AG04450 (cell line): ENCODE measurements at regions of chr11 and their contacts with region 1.

Region 1: DNA sequence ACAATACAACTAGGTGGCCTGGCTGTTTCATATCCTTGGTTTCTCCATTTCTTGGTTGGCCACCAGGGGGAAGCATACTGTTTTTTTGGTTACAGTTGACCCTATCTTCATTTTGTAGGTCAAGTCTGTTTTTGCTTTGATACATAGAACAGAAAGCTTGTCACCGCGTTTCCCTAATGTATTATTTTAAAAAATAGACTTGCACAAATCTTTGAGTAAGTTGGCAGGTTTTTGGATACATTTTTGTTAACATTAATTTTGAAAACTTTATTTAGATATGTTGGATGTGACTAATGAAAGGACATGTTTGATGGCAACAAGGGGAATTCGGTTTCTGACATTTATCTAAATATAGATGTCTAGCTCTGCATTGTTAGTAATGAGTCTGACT is 3.0 kb downstream of the NCR3LG1 start:
- DNase-seq: peak; percentile 26
- H3K4me3 ChIP-seq: no peak overlapping the region; the same call in 1 of the 2 replicates
- H3K27ac ChIP-seq: no peak overlapping the region
- H3K27me3 ChIP-seq: no peaks in the 10 kb centered on the region
- CTCF ChIP-seq: peak; percentile 73

Region 2: GRCh38 chr11:17129003-17129402 is 225.6 kb before region 1 on chr11:
- CTCF ChIA-PET with region 1: interaction called, 11 read pairs
- POLR2A ChIA-PET with region 1: no interaction called
- DNase-seq: no peak
- H3K4me3 ChIP-seq: no peak overlapping the region
- H3K27ac ChIP-seq: no peak overlapping the region
- H3K27me3 ChIP-seq: no peaks in the 10 kb centered on the region
- CTCF ChIP-seq: no peak

Region 3: GRCh38 chr11:17276236-17277023 is 78.2 kb before region 1 on chr11 and contains the start of gene NUCB2:
- CTCF ChIA-PET with region 1: interaction called, 15 read pairs
- POLR2A ChIA-PET with region 1: interaction called, 3 read pairs
- DNase-seq: peak; percentile 89
- H3K4me3 ChIP-seq: peak within 1 kb of the TSS; percentile 90
- H3K27ac ChIP-seq: peak within 1 kb of the TSS; percentile 92
- H3K27me3 ChIP-seq: no peaks in the 10 kb centered on the region
- CTCF ChIP-seq: no peak
- polyA plus RNA-seq, gene NUCB2: 183 and 275 TPM in 2 replicates

Region 4: GRCh38 chr11:17343907-17344306 is 10.7 kb before region 1 on chr11:
- CTCF ChIA-PET with region 1: interaction called, 17 read pairs
- POLR2A ChIA-PET with region 1: no interaction called
- DNase-seq: no peak
- H3K4me3 ChIP-seq: no peak overlapping the region
- H3K27ac ChIP-seq: no peak overlapping the region
- H3K27me3 ChIP-seq: no peaks in the 10 kb centered on the region
- CTCF ChIP-seq: no peak

Region 5: DNA sequence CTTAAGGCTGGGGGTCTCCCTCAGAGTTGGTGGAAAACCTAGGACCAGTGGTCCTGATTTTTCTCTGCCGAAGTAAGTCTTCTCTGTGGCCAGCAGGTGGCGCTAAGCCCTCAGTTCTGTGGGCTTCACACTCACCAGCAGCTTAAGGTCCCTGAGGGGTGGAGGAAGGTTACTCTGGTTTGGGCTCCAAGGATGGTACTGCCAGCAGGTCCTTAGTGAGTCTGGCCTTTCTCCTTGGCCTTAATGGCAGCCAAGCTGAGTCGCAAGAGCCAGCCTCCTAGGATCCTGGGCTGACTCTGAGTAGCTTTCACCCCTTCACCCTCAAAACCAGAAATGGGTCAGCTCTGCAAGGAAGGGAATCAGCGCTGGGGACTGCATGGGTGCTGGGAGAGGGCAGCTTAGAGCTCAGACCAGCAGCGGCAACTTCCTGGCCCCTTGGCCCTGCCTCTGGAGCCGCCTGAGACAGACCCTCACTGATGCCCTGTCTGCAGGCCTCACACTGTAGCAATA is 29.5 kb after region 1 on chr11:
- CTCF ChIA-PET with region 1: interaction called, 39 read pairs
- POLR2A ChIA-PET with region 1: interaction called, 3 read pairs
- DNase-seq: peak; percentile 65
- H3K4me3 ChIP-seq: no peak overlapping the region
- H3K27ac ChIP-seq: no peak overlapping the region
- H3K27me3 ChIP-seq: peaks cover 6% of the 10 kb centered on the region
- CTCF ChIP-seq: peak; percentile 92

Region 6: GRCh38 chr11:17528181-17528691 is 173.6 kb after region 1 on chr11:
- CTCF ChIA-PET with region 1: interaction called, 18 read pairs
- POLR2A ChIA-PET with region 1: no interaction called
- DNase-seq: no peak
- H3K4me3 ChIP-seq: no peak overlapping the region
- H3K27ac ChIP-seq: no peak overlapping the region
- H3K27me3 ChIP-seq: peaks cover 11% of the 10 kb centered on the region
- CTCF ChIP-seq: peak; percentile 71